Naive thymus-derived CD4-positive, alpha-beta T cell (primary cell): ENCODE measurements at regions of chr2 and their contacts with region 1.

Region 1: DNA sequence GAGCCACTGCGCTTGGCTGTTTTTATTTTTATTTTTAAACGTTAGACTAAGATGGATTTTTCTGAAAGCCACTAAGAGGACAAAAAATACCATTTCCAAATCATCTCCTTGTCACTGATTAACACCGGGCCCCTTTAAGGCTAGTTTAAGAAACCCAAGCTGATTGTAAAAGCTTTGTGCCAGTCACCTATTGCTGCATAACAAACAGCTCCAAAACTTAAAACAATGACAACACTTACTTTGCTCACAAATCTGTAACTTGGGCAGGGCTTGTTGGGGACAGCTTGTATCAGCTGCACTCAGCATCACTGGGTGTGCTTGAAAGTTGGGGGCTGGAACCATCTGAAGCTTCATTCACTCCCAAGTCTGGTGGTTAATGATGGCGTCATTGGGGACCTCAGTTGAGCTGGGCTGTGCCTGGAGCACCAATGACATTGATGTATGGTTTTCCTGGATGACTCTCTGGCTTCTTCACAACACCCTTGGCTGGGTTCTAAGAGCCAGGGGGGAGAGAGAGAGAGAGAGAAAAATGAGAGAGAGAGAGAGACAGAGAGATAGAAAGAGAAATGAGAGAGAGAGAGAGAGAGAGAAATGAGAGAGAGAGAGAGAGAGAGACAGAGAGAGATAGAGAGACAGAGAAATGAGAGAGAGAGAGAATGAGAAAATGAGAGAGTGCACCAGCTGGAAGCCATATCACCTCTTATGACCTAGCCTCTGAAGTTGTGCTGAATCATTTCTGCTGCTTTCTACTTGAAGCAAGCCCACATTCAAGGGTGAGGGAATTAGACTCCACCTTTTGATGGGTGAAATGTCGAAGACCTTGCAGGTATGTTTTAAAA is 26.0 kb upstream of the ATG16L1 start:
- DNase-seq: no peak
- ATAC-seq: no peak
- H3K4me3 ChIP-seq: no peak overlapping the region
- H3K4me3 Mint-ChIP-seq: peak overlapping the region in 1 of 10 donors; percentile 54
- H3K27ac ChIP-seq: no peak overlapping the region
- H3K27ac Mint-ChIP-seq: peak overlapping the region in 2 of 9 donors; percentile 21 to 78
- H3K4me1 ChIP-seq: no peaks in the 10 kb centered on the region
- H3K4me1 Mint-ChIP-seq: peaks cover 0 to 24% (median 5%) of the 10 kb centered on the region in 7 donors
- H3K27me3 ChIP-seq: no peaks in the 10 kb centered on the region
- H3K27me3 Mint-ChIP-seq: peaks cover 0 to 2% (median 0%) of the 10 kb centered on the region in 5 donors

Region 2: DNA sequence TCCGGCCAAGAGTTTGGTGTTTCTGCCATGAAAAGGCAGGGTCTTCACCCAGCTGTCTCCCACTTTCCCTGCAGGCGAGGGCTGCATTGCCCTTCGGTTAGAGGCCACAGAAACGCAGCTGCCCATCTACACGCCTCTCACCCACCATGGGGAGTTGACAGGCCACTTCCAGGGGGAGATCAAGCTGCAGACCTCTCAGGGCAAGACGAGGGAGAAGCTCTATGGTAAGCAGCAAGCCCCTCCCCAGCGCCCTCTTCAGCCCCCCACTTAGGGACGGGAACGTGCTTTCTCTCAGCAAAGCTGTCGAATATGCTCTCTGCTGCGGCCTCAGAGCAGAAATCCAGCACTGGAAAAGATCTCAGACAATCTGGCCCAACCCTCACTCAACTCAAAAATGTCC is 31.7 kb before region 1 on chr2:
- CTCF ChIA-PET with region 1: no interaction called
- POLR2A ChIA-PET with region 1: no interaction called
- intact Hi-C with region 1: loop called in 1 of 2 experiments (anchors 5 kb)
- DNase-seq: no peak
- ATAC-seq: no peak
- H3K4me3 ChIP-seq: no peak overlapping the region
- H3K4me3 Mint-ChIP-seq: no peak overlapping the region
- H3K27ac ChIP-seq: no peak overlapping the region
- H3K27ac Mint-ChIP-seq: peak overlapping the region in 3 of 9 donors; percentile 28 to 71 (median 51)
- H3K4me1 ChIP-seq: no peaks in the 10 kb centered on the region
- H3K4me1 Mint-ChIP-seq: peaks cover 0 to 8% (median 0%) of the 10 kb centered on the region in 7 donors
- H3K27me3 ChIP-seq: no peaks in the 10 kb centered on the region
- H3K27me3 Mint-ChIP-seq: no peaks in the 10 kb centered on the region

Region 3: GRCh38 chr2:233210843-233211547 is 14.5 kb before region 1 on chr2:
- CTCF ChIA-PET with region 1: no interaction called
- POLR2A ChIA-PET with region 1: no interaction called
- intact Hi-C with region 1: no loop called
- DNase-seq: no peak
- ATAC-seq: no peak
- H3K4me3 ChIP-seq: no peak overlapping the region
- H3K4me3 Mint-ChIP-seq: no peak overlapping the region
- H3K27ac ChIP-seq: no peak overlapping the region
- H3K27ac Mint-ChIP-seq: peak overlapping the region in 7 of 9 donors; percentile 9 to 81 (median 67)
- H3K4me1 ChIP-seq: no peaks in the 10 kb centered on the region
- H3K4me1 Mint-ChIP-seq: peaks cover 5 to 22% (median 10%) of the 10 kb centered on the region in 7 donors
- H3K27me3 ChIP-seq: no peaks in the 10 kb centered on the region
- H3K27me3 Mint-ChIP-seq: no peaks in the 10 kb centered on the region

Region 4: DNA sequence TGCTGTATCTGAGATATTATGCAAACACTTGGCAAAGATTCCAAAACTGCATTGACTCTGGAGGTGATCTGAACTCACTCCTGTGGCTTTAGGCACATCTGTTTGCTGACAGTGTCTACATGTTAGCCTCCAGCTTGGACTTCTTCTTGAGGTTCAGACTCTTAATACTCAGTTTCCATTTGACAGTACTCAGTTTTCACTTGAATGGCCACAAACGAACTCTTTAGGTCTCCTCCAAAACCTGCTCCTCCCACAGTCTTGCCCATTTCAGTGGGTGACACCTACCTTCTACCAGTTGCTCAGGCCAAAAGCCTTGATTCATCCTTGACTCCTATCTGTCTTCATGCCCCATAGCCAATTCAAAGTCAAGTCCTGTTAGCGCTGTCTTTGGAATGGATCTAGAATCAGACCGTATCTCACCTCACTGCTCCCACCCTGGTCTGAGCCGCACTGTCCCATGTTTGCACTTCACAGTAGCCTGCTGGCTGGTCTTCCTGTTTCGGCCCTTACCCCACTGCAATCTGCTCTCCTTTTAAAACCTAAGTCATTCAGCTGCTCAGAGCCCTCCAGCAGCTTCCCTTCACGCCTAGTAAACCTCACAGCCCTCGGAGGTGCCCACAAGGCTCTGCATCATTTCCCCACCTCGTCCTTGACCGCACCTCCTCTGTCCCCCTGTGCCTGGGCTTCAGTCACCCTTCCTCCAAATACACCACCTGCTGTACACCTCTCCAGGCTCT is 36.5 kb after region 1 on chr2:
- CTCF ChIA-PET with region 1: no interaction called
- POLR2A ChIA-PET with region 1: no interaction called
- intact Hi-C with region 1: no loop called
- DNase-seq: no peak
- ATAC-seq: peak; percentile 24
- H3K4me3 ChIP-seq: no peak overlapping the region
- H3K4me3 Mint-ChIP-seq: peak overlapping the region in 2 of 10 donors; percentile 33 to 37
- H3K27ac ChIP-seq: no peak overlapping the region
- H3K27ac Mint-ChIP-seq: peak overlapping the region; percentile 29 to 91 (median 77)
- H3K4me1 ChIP-seq: peaks cover 15 to 30% of the 10 kb centered on the region in 2 donors
- H3K4me1 Mint-ChIP-seq: peaks cover 16 to 77% (median 66%) of the 10 kb centered on the region in 7 donors
- H3K27me3 ChIP-seq: no peaks in the 10 kb centered on the region
- H3K27me3 Mint-ChIP-seq: no peaks in the 10 kb centered on the region

Region 5: GRCh38 chr2:233303252-233303651 is 77.8 kb after region 1 on chr2:
- CTCF ChIA-PET with region 1: no interaction called
- POLR2A ChIA-PET with region 1: no interaction called
- intact Hi-C with region 1: no loop called
- DNase-seq: no peak
- ATAC-seq: no peak
- H3K4me3 ChIP-seq: no peak overlapping the region
- H3K4me3 Mint-ChIP-seq: no peak overlapping the region
- H3K27ac ChIP-seq: no peak overlapping the region
- H3K27ac Mint-ChIP-seq: peak overlapping the region in 1 of 9 donors; percentile 20
- H3K4me1 ChIP-seq: no peaks in the 10 kb centered on the region
- H3K4me1 Mint-ChIP-seq: peaks cover 0 to 11% (median 4%) of the 10 kb centered on the region in 7 donors
- H3K27me3 ChIP-seq: no peaks in the 10 kb centered on the region
- H3K27me3 Mint-ChIP-seq: peaks cover 0 to 3% (median 0%) of the 10 kb centered on the region in 5 donors

Region 6: GRCh38 chr2:234251326-234252271 is 1026.2 kb after region 1 on chr2:
- CTCF ChIA-PET with region 1: no interaction called
- POLR2A ChIA-PET with region 1: no interaction called
- intact Hi-C with region 1: no loop called
- DNase-seq: no peak
- ATAC-seq: no peak
- H3K4me3 ChIP-seq: no peak overlapping the region
- H3K4me3 Mint-ChIP-seq: no peak overlapping the region
- H3K27ac ChIP-seq: no peak overlapping the region
- H3K27ac Mint-ChIP-seq: no peak overlapping the region
- H3K4me1 ChIP-seq: no peaks in the 10 kb centered on the region
- H3K4me1 Mint-ChIP-seq: peaks cover 0 to 13% (median 5%) of the 10 kb centered on the region in 7 donors
- H3K27me3 ChIP-seq: no peaks in the 10 kb centered on the region
- H3K27me3 Mint-ChIP-seq: peaks cover 0 to 8% (median 0%) of the 10 kb centered on the region in 5 donors